ENCODE measurements at regions of chr2 and their contacts with region 1.

Region 1: DNA sequence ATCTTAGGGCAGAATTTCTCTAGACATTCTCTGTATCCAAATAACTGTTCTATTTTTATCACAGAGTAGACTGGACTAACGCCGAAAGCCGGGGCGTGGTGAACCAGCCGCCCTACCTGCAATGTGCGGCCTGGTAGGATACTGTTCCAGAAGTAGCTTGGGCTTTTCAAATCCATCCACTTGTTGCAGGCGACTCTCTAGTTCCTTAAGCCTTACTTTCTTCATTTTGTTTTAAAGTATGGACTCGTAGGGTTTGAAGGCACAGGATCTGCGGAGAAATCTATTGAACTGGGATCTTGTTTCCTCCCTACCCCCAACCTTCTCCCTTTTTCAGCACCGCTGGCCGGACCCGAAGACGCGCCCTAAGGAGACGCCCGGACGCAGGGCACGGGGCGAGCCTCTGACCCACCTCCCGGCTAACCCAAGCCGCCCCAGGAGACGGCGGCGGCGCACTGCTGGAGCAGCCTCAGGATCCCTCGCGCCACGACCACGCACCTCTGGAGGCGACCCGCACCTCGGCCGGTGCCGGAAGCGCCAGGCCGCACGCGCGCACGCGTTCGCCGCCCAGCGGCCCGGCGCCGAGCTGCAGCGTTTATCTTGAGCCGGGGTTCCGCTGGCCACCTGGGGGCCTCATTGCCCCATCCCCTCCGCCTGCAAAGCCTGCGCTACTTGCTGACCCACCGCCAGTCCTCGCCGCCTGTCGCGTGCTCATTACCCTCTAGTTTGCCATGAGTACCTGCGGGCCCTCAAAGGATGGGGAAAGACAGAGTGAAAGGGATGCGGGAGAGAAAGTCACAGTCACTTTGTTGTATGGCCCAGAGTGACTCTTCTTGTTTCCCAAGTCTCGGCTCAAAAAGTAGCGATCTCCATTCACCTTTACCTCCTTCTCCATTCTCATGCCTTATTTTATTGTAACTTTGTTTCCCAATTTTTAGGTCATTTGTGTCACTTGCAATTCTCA is at the start of gene METTL5:
- DNase-seq: peak; percentile 91
- H3K4me3 Mint-ChIP-seq: peak within 1 kb of the TSS; percentile 90
- H3K27ac Mint-ChIP-seq: peak within 1 kb of the TSS; percentile 40
- H3K4me1 Mint-ChIP-seq: peaks cover 44% of the 10 kb centered on the region
- H3K27me3 Mint-ChIP-seq: no peaks in the 10 kb centered on the region
- CTCF ChIP-seq: peak; percentile 98
- total RNA-seq, gene METTL5: 63.1 and 68.2 TPM in 2 replicates

Region 2: DNA sequence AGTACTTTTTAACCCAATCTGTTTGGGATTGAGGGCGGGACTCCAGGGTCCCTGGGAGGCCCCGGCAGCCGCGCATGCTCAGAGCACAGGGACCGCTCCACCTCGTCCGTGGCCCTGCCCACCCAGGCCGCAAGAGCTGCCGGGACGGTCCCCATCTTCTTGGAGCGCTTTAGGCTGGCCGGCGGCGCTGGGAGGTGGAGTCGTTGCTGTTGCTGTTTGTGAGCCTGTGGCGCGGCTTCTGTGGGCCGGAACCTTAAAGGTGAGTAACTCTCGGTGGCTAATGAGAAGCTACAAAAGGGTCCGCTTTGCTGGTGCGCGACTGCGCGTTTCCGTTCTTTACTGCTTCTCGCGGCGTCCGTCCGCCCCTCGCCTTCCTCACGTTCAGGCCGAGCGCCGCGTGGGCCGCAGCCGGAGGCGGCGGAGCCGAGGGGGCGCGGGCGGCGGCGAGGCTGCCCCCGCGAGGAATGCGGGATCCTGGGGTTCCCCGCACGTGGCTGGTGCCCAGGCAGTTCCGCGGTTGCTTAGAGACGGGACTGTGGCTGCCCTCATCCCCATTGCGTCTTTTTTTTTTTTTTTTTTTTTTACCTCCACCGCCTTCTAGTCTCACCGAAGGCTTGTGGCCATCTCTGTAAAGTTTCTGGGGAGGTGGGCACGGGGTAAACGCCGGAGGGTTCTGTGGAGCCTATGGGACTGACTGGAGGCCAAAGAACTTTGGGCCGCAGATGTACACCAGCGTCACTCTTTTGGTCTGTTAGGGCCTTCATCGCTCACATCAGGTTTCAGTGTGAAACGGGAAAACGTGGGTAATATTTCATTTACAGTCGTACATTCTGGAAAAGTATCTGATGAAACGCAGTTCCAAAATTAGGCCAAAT is 25.7 kb before region 1 on chr2 and contains the start of gene SSB:
- CTCF ChIA-PET with region 1: no interaction called
- intact Hi-C with region 1: no loop called
- DNase-seq: peak; percentile 95
- H3K4me3 Mint-ChIP-seq: peak within 1 kb of the TSS; percentile 80
- H3K27ac Mint-ChIP-seq: peak within 1 kb of the TSS; percentile 78
- H3K4me1 Mint-ChIP-seq: no peaks in the 10 kb centered on the region
- H3K27me3 Mint-ChIP-seq: no peaks in the 10 kb centered on the region
- CTCF ChIP-seq: no peak
- total RNA-seq, gene SSB: 143 TPM in 2 replicates

Region 3: DNA sequence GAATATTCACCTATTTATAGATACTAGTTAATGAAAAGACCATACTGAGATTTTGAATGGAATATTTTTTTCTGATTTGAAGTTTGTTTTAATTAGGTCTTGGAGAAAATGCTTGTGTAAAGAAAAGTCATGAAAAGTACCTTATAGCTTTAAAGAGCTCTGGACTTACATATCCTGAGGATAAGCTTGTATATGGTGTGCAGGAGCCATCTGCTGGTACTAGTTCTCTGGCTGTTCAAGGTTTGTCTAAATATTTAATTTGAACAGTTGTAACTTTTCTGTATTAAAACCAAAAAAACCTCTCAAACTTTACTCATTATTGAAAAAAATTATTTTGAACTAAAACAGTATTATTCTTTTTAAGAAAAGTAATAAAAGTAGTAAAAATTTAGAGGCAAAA is 52.7 kb after region 1 on chr2:
- CTCF ChIA-PET with region 1: interaction called, 11 read pairs
- intact Hi-C with region 1: loop called (anchors 5 kb)
- DNase-seq: no peak
- H3K4me3 Mint-ChIP-seq: no peak overlapping the region
- H3K27ac Mint-ChIP-seq: no peak overlapping the region
- H3K4me1 Mint-ChIP-seq: no peaks in the 10 kb centered on the region
- H3K27me3 Mint-ChIP-seq: no peaks in the 10 kb centered on the region
- CTCF ChIP-seq: no peak